Endothelial cell of umbilical vein (primary cell): ENCODE measurements at regions of chr10 and their contacts with region 1.

Region 1: DNA sequence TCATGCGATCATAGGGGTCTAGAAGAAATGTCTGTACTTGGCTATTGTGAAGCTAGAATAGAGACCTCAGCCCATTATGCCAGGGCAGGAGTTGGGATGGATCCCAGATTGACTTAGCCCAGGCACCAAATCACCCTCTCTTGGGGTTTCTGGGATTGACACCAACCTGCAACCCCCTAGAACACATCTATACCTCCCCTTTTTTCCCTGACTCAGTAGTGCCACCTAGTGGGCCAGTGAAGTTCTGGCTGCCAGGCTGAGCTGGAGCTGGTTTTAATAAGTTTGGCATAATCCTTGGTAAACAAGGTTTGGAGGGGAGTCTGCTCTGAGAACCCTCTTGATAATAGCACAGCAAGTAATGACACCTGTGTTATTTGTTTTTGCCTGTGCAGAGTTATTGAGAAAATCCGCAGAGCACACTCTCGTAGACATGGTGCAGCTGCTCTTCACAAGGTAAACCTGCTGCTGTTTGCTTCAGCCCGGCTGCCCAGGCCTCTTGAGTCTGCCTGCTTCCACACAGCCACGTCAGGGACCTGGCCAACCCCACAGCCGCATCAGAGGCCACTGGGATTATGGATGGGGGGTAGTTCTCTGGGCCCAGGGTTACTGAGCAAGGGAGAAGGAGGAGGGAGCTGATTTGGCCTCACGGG is 43.3 kb upstream of the NFKB2 start:
- DNase-seq: peak; percentile 58
- H3K4me3 ChIP-seq: no peak overlapping the region
- H3K27ac ChIP-seq: no peak overlapping the region
- H3K4me1 ChIP-seq: no peaks in the 10 kb centered on the region
- H3K27me3 ChIP-seq: no peaks in the 10 kb centered on the region
- CTCF ChIP-seq: peak; percentile 87 to 96
- POLR2A ChIP-seq: no peak

Region 2: DNA sequence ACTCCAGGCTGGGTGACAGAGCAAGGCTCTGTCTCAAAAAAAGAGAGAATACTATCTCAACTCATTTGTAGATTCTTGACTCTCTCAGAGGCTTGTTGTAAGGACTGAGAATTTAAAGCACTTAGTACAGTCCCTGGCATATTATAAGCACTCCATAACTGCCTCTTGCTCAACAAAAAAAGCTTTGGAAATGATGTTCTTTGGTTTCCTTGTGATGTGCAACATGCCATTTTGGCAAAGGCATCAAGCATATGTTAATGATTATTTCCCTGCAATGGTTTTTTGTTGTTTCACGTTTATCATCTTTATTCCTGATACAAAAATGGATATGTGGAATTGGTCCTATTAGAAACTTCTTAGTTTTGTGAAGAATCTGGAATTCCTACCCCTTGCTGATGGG is 184.3 kb before region 1 on chr10:
- CTCF ChIA-PET with region 1: interaction called, 103 read pairs
- POLR2A ChIA-PET with region 1: interaction called, 3 read pairs
- dilution Hi-C with region 1: no loop called
- intact Hi-C with region 1: loop called (anchors 1 kb)
- DNase-seq: no peak
- H3K4me3 ChIP-seq: no peak overlapping the region
- H3K27ac ChIP-seq: no peak overlapping the region
- H3K4me1 ChIP-seq: no peaks in the 10 kb centered on the region
- H3K27me3 ChIP-seq: no peaks in the 10 kb centered on the region
- CTCF ChIP-seq: no peak
- POLR2A ChIP-seq: no peak

Region 3: GRCh38 chr10:102245101-102245931 is 106.9 kb before region 1 on chr10 and contains the start of gene GBF1:
- CTCF ChIA-PET with region 1: interaction called, 1,402 read pairs
- POLR2A ChIA-PET with region 1: no interaction called
- dilution Hi-C with region 1: loop called (anchors 25 kb)
- intact Hi-C with region 1: no loop called
- DNase-seq: peak; percentile 100
- H3K4me3 ChIP-seq: peak within 1 kb of the TSS; percentile 59 to 90 (median 85)
- H3K27ac ChIP-seq: peak within 1 kb of the TSS; percentile 61
- H3K4me1 ChIP-seq: peaks cover 29% of the 10 kb centered on the region
- H3K27me3 ChIP-seq: peaks cover 8% of the 10 kb centered on the region in 2 experiments
- CTCF ChIP-seq: no peak
- POLR2A ChIP-seq: peak; percentile 83
- total RNA-seq, gene GBF1: 45.7 and 49.7 TPM in 2 replicates

Region 4: DNA sequence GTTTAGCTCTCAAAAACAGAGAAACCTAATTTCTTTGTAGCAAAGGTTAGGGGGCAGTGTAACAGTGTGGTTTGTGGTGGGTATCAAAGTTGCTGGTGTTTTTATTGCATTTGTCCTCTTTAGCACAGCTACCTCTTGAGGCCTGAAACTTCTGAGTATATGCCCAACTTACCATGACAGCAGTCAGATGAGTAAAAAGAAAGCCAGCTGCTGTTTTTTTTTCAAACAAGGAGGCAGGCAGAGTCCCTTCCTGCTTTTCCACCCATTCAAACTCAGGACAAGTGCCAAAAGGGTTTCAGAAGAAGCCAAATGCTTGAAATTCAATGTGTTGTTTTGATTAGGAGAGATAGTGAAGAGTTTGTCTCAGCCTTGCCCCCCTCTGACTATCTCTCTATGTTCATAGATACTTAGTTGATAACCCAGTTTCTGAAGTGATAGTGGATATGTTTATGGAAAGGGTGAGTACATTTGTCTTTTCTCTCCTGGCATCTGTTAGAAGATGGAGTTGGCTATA is 83.8 kb before region 1 on chr10:
- CTCF ChIA-PET with region 1: interaction called, 22 read pairs
- POLR2A ChIA-PET with region 1: no interaction called
- dilution Hi-C with region 1: no loop called
- intact Hi-C with region 1: no loop called
- DNase-seq: peak; percentile 31
- H3K4me3 ChIP-seq: no peak overlapping the region
- H3K27ac ChIP-seq: no peak overlapping the region
- H3K4me1 ChIP-seq: peaks cover 7% of the 10 kb centered on the region
- H3K27me3 ChIP-seq: no peaks in the 10 kb centered on the region
- CTCF ChIP-seq: no peak
- POLR2A ChIP-seq: no peak

Region 5: GRCh38 chr10:102300278-102300843 is 51.8 kb before region 1 on chr10:
- CTCF ChIA-PET with region 1: interaction called, 18 read pairs
- POLR2A ChIA-PET with region 1: no interaction called
- dilution Hi-C with region 1: no loop called
- intact Hi-C with region 1: no loop called
- DNase-seq: peak; percentile 87
- H3K4me3 ChIP-seq: peak overlapping the region in 1 of 3 experiments; percentile 9
- H3K27ac ChIP-seq: peak overlapping the region; percentile 77
- H3K4me1 ChIP-seq: peaks cover 25% of the 10 kb centered on the region
- H3K27me3 ChIP-seq: no peaks in the 10 kb centered on the region
- CTCF ChIP-seq: no peak
- POLR2A ChIP-seq: no peak

Region 6: GRCh38 chr10:102322914-102323313 is 29.3 kb before region 1 on chr10:
- CTCF ChIA-PET with region 1: interaction called, 13 read pairs
- POLR2A ChIA-PET with region 1: no interaction called
- dilution Hi-C with region 1: no loop called
- intact Hi-C with region 1: no loop called
- DNase-seq: no peak
- H3K4me3 ChIP-seq: no peak overlapping the region
- H3K27ac ChIP-seq: no peak overlapping the region
- H3K4me1 ChIP-seq: no peaks in the 10 kb centered on the region
- H3K27me3 ChIP-seq: no peaks in the 10 kb centered on the region
- CTCF ChIP-seq: no peak
- POLR2A ChIP-seq: no peak

Region 7: DNA sequence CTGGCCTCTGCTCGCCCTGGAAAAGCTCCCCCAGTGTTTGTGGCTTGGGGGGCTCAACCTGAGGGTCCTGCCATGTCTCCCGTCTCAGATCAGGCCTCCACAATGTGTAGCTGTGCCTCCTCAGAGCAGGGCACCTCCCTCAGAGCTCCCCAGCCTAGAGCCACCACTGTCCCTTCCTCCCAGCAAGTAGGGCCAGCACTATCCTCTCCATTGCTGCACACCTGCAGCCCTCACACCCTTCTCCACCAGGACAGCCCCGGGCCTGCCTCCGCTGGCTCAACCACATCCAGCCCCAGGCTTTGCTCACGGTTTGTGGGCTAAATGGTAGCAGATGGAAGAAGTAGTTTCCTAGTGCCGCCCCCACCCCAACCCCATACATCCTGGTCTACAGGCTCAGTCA is 53.4 kb after region 1 on chr10:
- CTCF ChIA-PET with region 1: interaction called, 15 read pairs
- POLR2A ChIA-PET with region 1: no interaction called
- dilution Hi-C with region 1: no loop called
- intact Hi-C with region 1: no loop called
- DNase-seq: no peak
- H3K4me3 ChIP-seq: no peak overlapping the region
- H3K27ac ChIP-seq: no peak overlapping the region
- H3K4me1 ChIP-seq: no peaks in the 10 kb centered on the region
- H3K27me3 ChIP-seq: peaks cover 25 to 27% of the 10 kb centered on the region in 2 experiments
- CTCF ChIP-seq: no peak
- POLR2A ChIP-seq: no peak

Region 8: DNA sequence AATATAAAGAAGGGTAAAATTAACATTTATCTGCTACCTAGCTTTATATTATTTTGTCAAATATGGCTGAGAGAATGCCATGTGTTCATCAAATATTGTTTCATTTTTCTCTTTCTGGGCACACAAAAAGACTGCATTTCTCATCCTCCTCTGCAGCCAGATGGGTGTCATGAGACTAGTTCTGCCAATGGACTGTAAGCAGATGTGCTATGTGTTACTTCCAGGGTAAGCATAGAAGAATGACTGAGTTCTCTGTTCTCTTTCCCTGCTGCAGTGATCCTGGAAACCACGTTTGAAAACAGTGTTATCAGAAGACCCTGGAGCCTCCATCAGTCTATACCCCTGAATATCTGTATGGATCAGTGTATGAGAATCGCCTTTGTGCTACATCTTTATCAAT is 1590.7 kb after region 1 on chr10:
- CTCF ChIA-PET with region 1: no interaction called
- POLR2A ChIA-PET with region 1: no interaction called
- dilution Hi-C with region 1: no loop called
- intact Hi-C with region 1: no loop called
- DNase-seq: no peak
- H3K4me3 ChIP-seq: no peak overlapping the region
- H3K27ac ChIP-seq: no peak overlapping the region
- H3K4me1 ChIP-seq: no peaks in the 10 kb centered on the region
- H3K27me3 ChIP-seq: no peaks in the 10 kb centered on the region
- CTCF ChIP-seq: no peak
- POLR2A ChIP-seq: no peak